Activated B cell treated with CpG ODN at 0.5 μM for 24 hours (primary cell): ENCODE measurements at regions of chr2 and their contacts with region 1.

Region 1: GRCh38 chr2:160269803-160270570 is 69.9 kb upstream of the ITGB6 start:
- DNase-seq: peak; percentile 64
- ATAC-seq: peak; percentile 96
- H3K4me3 Mint-ChIP-seq: peak overlapping the region; percentile 85
- H3K27ac Mint-ChIP-seq: peak overlapping the region; percentile 59
- H3K4me1 Mint-ChIP-seq: peaks cover 11% of the 10 kb centered on the region
- H3K27me3 Mint-ChIP-seq: no peaks in the 10 kb centered on the region
- CTCF ChIP-seq: no peak

Region 2: DNA sequence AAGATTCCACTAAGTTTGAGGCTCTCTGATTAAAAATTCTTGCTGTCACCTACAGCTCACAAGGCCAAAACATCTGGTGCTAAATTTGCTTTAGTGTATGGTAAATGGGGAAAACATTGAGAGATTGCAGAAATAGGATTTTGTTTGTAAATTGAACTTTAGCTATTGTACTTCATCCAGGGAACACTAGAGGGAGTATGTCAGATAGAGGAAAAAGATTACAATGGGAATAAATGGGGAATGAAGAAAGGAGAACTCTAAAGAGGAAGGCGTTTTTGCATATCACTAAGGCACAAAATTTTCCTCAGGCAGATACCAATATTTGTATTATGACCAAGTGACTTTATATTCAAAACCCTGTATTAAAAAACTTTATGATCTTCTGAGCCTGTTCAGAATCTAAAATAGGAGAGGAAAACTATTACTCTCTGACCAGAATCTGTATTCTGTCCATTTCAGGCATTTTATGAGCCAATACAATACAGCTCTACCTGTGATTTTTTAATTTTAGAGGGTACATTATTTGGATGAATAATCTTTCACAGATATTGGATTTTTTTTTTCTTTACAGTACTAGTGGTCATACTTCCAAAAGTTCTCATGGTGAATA is 17.6 kb before region 1 on chr2:
- CTCF ChIA-PET with region 1: interaction called, 33 read pairs
- POLR2A ChIA-PET with region 1: no interaction called
- intact Hi-C with region 1: no loop called
- DNase-seq: no peak
- ATAC-seq: no peak
- H3K4me3 Mint-ChIP-seq: no peak overlapping the region
- H3K27ac Mint-ChIP-seq: no peak overlapping the region
- H3K4me1 Mint-ChIP-seq: peaks cover 6% of the 10 kb centered on the region
- H3K27me3 Mint-ChIP-seq: peaks cover 8% of the 10 kb centered on the region
- CTCF ChIP-seq: peak; percentile 71